Activated CD4-positive, alpha-beta memory T cell treated with anti-CD3 and anti-CD28 coated beads for 36 hours (primary cell): ENCODE measurements at regions of chr3 and their contacts with region 1.

Region 1: DNA sequence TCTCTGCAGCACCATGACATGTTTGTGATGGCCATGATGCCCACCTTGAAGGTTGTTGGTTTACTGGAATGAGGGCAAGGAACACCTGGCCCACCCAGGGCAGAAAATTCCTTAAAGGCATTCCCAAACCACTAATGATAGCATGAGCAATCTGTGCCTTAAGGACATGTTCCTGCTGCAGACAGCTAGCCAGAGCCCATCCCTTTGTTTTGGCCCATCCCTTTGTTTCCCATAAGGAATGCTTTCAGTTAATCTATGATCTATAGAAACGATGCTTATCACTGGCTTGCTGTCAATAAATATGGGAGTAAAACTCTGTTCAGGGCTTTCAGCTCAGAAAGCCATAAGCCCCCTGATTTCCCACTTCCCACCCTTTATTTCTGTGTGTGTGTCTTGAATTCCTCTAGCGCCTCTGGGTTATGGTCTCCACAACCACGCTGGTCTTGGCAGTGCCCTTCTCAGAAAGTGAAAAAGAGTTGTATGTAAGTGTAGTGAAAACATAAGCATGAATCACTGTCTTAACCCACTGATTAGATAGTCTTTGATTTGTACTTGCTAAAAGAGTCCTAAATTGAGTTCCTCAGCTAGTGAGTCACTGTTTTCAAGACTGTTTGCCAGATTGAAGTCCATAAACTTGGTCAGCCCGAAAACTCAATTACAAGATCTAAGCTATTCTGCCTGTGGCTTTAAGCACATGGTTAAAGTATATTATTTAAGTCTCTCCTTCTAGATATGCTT is 19.0 kb upstream of the CCR2 start:
- DNase-seq: peak; percentile 30
- H3K4me3 Mint-ChIP-seq: no peak overlapping the region
- H3K27ac Mint-ChIP-seq: no peak overlapping the region
- H3K4me1 Mint-ChIP-seq: peaks cover 8% of the 10 kb centered on the region
- H3K27me3 Mint-ChIP-seq: peaks cover 16% of the 10 kb centered on the region

Region 2: DNA sequence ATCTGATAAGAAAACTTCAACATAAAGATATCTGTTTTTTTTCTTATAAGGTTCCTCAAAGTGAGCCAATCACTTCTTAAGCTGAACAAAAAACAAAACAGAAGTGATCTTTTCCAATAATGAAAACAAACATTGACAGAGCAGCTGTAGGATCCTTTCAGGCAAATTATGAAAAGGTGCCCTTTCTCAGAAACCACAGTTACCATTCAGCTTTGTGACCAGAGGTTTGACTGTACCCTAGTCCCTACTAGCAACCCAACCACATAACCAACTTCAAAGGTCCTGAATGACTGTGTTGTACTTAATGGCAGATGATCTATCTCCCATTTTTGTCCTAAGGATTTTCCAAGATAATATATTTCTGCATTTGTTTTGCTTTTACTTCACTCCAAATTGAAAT is 20.4 kb before region 1 on chr3:
- CTCF ChIA-PET with region 1: no interaction called
- POLR2A ChIA-PET with region 1: no interaction called
- intact Hi-C with region 1: loop called (anchors 2 kb)
- DNase-seq: no peak
- H3K4me3 Mint-ChIP-seq: no peak overlapping the region
- H3K27ac Mint-ChIP-seq: no peak overlapping the region
- H3K4me1 Mint-ChIP-seq: no peaks in the 10 kb centered on the region
- H3K27me3 Mint-ChIP-seq: peaks cover 12% of the 10 kb centered on the region

Region 3: DNA sequence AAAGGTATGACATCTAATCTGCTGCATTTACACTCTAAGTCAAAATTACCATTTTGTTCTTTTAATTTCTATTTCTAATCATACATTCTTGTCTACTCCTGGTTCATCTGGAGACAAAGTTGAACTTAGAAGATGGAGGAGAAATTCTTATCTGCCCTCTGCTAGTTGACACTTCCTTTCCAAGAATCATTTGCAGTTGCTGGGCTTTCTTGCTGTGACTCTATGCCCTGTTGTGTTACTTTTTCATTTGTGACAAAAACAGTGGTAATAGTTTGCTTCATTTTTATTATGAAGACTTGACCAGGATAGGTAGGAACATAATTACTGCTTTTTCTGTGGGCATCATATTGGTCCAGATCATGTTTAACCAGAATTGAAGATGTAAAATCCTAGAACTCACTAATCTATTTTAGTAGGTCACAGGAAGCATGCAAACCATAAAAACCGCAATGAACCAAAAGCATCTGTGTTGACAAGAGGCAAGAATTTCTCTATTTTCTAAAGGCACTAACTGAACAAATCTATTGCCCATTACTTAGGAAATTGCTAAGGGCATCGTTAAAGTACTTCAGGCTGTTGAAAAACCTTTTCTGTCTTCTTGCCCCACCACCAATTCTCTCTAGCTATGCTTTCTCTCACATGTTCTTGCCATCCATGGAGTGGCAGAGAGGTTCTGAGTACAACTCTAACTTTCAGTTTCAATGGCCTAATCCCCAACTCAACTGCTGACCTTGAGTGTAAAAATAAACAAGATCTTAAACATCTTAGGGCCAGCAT is 14.8 kb after region 1 on chr3:
- CTCF ChIA-PET with region 1: interaction called, 4 read pairs
- POLR2A ChIA-PET with region 1: interaction called, 3 read pairs
- intact Hi-C with region 1: loop called (anchors 2 kb)
- DNase-seq: no peak
- H3K4me3 Mint-ChIP-seq: no peak overlapping the region
- H3K27ac Mint-ChIP-seq: peak overlapping the region; percentile 73
- H3K4me1 Mint-ChIP-seq: peaks cover 58% of the 10 kb centered on the region
- H3K27me3 Mint-ChIP-seq: peaks cover 17% of the 10 kb centered on the region